OCI-LY7 (cell line): ENCODE measurements at regions of chr10 and their contacts with region 1.

Region 1: GRCh38 chr10:75019370-75019769 is 92.1 kb upstream of the SAMD8 start:
- DNase-seq: peak; percentile 48
- H3K4me3 ChIP-seq: no peak overlapping the region
- H3K27ac ChIP-seq: no peak overlapping the region
- H3K4me1 ChIP-seq: no peaks in the 10 kb centered on the region
- CTCF ChIP-seq: peak; percentile 82

Region 2: GRCh38 chr10:74262856-74263255 is 756.5 kb before region 1 on chr10:
- CTCF ChIA-PET with region 1: no interaction called
- POLR2A ChIA-PET with region 1: no interaction called
- intact Hi-C with region 1: loop called (anchors 1 kb)
- DNase-seq: no peak
- H3K4me3 ChIP-seq: no peak overlapping the region
- H3K27ac ChIP-seq: no peak overlapping the region
- H3K4me1 ChIP-seq: no peaks in the 10 kb centered on the region
- CTCF ChIP-seq: no peak

Region 3: DNA sequence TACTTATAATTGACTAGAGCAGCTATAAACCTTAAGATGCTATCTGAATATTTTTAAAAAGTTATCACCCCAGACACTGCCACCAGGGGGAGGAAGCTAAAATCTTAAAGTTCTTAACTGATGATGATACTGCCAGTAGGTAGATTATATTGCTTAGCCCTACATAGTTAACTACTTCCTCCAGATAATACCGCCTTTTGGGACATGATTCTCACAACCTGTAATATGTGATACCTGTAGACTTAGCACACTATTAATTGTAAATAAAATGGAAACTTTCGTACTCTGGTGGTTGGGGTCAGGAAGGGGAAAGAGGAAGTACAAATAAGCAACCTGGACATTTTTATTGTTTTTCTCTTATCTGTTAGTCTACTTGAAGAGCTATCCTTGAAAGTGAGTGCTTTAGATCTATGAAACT is 599.4 kb before region 1 on chr10:
- CTCF ChIA-PET with region 1: no interaction called
- POLR2A ChIA-PET with region 1: interaction called, 4 read pairs
- intact Hi-C with region 1: loop called (anchors 2 kb)
- DNase-seq: peak; percentile 46
- H3K4me3 ChIP-seq: no peak overlapping the region
- H3K27ac ChIP-seq: no peak overlapping the region
- H3K4me1 ChIP-seq: peaks cover 13% of the 10 kb centered on the region
- CTCF ChIP-seq: peak; percentile 84

Region 4: GRCh38 chr10:74738985-74739567 is 280.3 kb before region 1 on chr10:
- CTCF ChIA-PET with region 1: no interaction called
- POLR2A ChIA-PET with region 1: interaction called, 4 read pairs
- intact Hi-C with region 1: loop called (anchors 2 kb)
- DNase-seq: peak; percentile 85
- H3K4me3 ChIP-seq: peak overlapping the region; percentile 29
- H3K27ac ChIP-seq: peak overlapping the region; percentile 55
- H3K4me1 ChIP-seq: peaks cover 24% of the 10 kb centered on the region
- CTCF ChIP-seq: peak; percentile 69

Region 5: DNA sequence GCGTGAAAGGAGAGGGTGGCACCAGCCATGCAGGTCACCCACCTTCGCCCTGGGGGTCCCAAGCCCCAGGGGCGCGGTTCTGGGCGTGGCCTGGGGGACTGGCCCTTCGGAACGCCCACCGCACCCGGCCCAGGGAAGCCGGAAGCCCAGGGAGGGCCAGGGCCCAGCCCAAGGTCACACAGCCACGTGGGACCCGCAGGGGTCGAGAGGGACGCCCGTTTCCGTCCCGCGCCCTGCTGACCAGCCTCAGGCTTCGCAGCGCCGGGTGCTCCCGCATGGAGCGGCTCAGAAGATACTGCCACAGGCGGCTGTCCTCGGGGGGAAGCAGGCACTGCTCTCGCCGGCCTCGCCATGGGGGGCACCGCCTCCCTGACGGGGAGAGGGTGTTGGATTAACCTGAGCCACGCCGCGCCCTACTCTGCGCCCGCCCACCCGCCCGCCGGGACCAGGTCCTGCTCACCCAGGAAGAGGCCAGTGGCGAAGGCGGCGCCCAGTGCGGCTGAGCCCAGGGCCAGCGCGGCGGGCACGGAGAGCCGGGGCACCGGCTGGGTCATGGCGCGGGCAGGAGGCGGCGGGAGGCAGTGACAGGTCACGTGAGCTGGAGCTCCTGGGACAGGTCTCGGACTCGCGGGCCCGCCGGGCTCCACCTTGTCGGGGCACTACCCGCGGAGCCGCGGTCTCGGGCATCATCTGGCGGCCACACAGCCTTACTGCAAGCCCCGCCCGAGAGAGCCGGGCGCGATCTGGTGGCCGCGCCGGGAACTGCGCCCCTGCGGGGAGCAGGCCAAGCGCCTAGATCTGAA is 216.2 kb after region 1 on chr10 and contains the start of gene COMTD1:
- CTCF ChIA-PET with region 1: no interaction called
- POLR2A ChIA-PET with region 1: no interaction called
- intact Hi-C with region 1: loop called (anchors 10 kb)
- DNase-seq: peak; percentile 95
- H3K4me3 ChIP-seq: peak within 1 kb of the TSS; percentile 80
- H3K27ac ChIP-seq: peak within 1 kb of the TSS; percentile 77
- H3K4me1 ChIP-seq: peaks cover 19% of the 10 kb centered on the region
- CTCF ChIP-seq: peak; percentile 99
- total RNA-seq, gene COMTD1: 20.7 and 37.7 TPM in 2 replicates